ENCODE measurements at regions of chr1 and their contacts with region 1.

Region 1: GRCh38 chr1:89454845-89455521 is 69.6 kb upstream of the LRRC8B start:
- DNase-seq: peak; percentile 71
- H3K4me3 Mint-ChIP-seq: no peak overlapping the region
- H3K27ac Mint-ChIP-seq: no peak overlapping the region
- H3K4me1 Mint-ChIP-seq: peaks cover 22% of the 10 kb centered on the region
- H3K27me3 Mint-ChIP-seq: peaks cover 21% of the 10 kb centered on the region

Region 2: GRCh38 chr1:88973520-88974137 is 481.4 kb before region 1 on chr1:
- CTCF ChIA-PET with region 1: interaction called, 23 read pairs
- POLR2A ChIA-PET with region 1: no interaction called
- intact Hi-C with region 1: no loop called
- DNase-seq: no peak
- H3K4me3 Mint-ChIP-seq: no peak overlapping the region
- H3K27ac Mint-ChIP-seq: no peak overlapping the region
- H3K4me1 Mint-ChIP-seq: peaks cover 28% of the 10 kb centered on the region
- H3K27me3 Mint-ChIP-seq: no peaks in the 10 kb centered on the region

Region 3: GRCh38 chr1:89041119-89041641 is 413.8 kb before region 1 on chr1:
- CTCF ChIA-PET with region 1: interaction called, 4 read pairs
- POLR2A ChIA-PET with region 1: interaction called, 7 read pairs
- intact Hi-C with region 1: loop called (anchors 1 kb)
- DNase-seq: peak; percentile 66
- H3K4me3 Mint-ChIP-seq: no peak overlapping the region
- H3K27ac Mint-ChIP-seq: peak overlapping the region; percentile 70
- H3K4me1 Mint-ChIP-seq: peaks cover 41% of the 10 kb centered on the region
- H3K27me3 Mint-ChIP-seq: peaks cover 13% of the 10 kb centered on the region

Region 4: GRCh38 chr1:89198491-89199072 is 256.4 kb before region 1 on chr1 and contains the start of gene GBP4:
- CTCF ChIA-PET with region 1: interaction called, 3 read pairs
- POLR2A ChIA-PET with region 1: no interaction called
- intact Hi-C with region 1: loop called (anchors 2 kb)
- DNase-seq: peak; percentile 60
- H3K4me3 Mint-ChIP-seq: peak within 1 kb of the TSS; percentile 88
- H3K27ac Mint-ChIP-seq: peak within 1 kb of the TSS; percentile 90
- H3K4me1 Mint-ChIP-seq: peaks cover 80% of the 10 kb centered on the region
- H3K27me3 Mint-ChIP-seq: no peaks in the 10 kb centered on the region
- total RNA-seq, gene GBP4: 26.5 to 29.9 TPM

Region 5: GRCh38 chr1:89298461-89298860 is 156.5 kb before region 1 on chr1:
- CTCF ChIA-PET with region 1: interaction called, 3 read pairs
- POLR2A ChIA-PET with region 1: no interaction called
- intact Hi-C with region 1: loop called (anchors 1 kb)
- DNase-seq: no peak
- H3K4me3 Mint-ChIP-seq: no peak overlapping the region
- H3K27ac Mint-ChIP-seq: no peak overlapping the region
- H3K4me1 Mint-ChIP-seq: peaks cover 63% of the 10 kb centered on the region
- H3K27me3 Mint-ChIP-seq: no peaks in the 10 kb centered on the region

Region 6: DNA sequence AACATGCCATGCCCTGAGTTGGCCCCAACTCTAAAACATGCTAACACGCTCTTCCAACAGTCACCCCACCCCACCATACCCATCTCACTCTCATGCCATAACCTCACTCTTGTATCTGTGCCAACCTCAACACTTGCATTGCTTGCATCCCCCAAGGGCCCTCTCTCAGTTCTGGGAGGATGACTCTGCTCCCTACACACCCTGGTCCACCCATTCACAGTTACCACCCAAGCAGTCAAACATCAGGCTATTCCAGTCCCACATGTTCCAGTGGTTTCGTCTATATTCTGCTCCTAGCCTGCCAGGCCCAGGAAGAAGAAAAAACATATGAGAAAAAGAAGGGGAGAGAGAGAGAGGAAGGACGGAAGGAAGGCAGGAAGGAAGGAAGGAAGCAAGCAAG is 60.1 kb before region 1 on chr1:
- CTCF ChIA-PET with region 1: no interaction called
- POLR2A ChIA-PET with region 1: no interaction called
- intact Hi-C with region 1: no loop called
- DNase-seq: no peak
- H3K4me3 Mint-ChIP-seq: no peak overlapping the region
- H3K27ac Mint-ChIP-seq: no peak overlapping the region
- H3K4me1 Mint-ChIP-seq: no peaks in the 10 kb centered on the region
- H3K27me3 Mint-ChIP-seq: no peaks in the 10 kb centered on the region

Region 7: GRCh38 chr1:89465201-89465600 is 10.2 kb after region 1 on chr1:
- CTCF ChIA-PET with region 1: interaction called, 5 read pairs
- POLR2A ChIA-PET with region 1: interaction called, 7 read pairs
- intact Hi-C with region 1: loop called (anchors 2 kb)
- DNase-seq: peak; percentile 55
- H3K4me3 Mint-ChIP-seq: no peak overlapping the region
- H3K27ac Mint-ChIP-seq: peak overlapping the region; percentile 47
- H3K4me1 Mint-ChIP-seq: peaks cover 20% of the 10 kb centered on the region
- H3K27me3 Mint-ChIP-seq: peaks cover 44% of the 10 kb centered on the region